Posterior vena cava (tissue), 2 donors: ENCODE measurements at regions of chr4 and their contacts with region 1.

Region 1: DNA sequence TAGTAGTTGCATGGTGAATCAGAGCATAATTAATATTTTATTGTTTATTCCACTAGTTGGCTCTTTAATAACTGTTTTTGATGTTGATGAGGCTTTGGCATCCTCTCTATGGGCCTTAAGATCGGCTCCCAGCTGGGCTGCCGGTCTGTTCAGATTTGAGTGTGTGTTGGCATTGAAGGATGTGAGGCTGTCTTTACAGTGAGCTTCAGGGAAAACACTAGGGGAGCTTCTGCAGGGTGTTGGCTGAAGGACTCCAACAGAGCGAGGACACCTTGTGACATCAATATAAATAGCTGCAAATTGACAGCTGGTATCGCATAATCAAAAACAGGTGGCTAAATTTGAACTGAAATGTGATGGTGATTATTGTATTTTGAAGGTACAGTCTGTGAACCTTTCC is 322.0 kb downstream of the FSTL5 start:
- DNase-seq: no peak

Region 2: GRCh38 chr4:161828061-161828460 is 13.7 kb before region 1 on chr4:
- intact Hi-C with region 1: no loop called
- DNase-seq: no peak

Region 3: GRCh38 chr4:161907590-161907955 is 65.8 kb after region 1 on chr4:
- intact Hi-C with region 1: loop called in 1 of 2 experiments (anchors 2 kb)
- DNase-seq: no peak

Region 4: GRCh38 chr4:162015090-162015489 is 173.3 kb after region 1 on chr4:
- intact Hi-C with region 1: no loop called
- DNase-seq: no peak